ENCODE measurements at regions of chr19 and their contacts with region 1.

Region 1: DNA sequence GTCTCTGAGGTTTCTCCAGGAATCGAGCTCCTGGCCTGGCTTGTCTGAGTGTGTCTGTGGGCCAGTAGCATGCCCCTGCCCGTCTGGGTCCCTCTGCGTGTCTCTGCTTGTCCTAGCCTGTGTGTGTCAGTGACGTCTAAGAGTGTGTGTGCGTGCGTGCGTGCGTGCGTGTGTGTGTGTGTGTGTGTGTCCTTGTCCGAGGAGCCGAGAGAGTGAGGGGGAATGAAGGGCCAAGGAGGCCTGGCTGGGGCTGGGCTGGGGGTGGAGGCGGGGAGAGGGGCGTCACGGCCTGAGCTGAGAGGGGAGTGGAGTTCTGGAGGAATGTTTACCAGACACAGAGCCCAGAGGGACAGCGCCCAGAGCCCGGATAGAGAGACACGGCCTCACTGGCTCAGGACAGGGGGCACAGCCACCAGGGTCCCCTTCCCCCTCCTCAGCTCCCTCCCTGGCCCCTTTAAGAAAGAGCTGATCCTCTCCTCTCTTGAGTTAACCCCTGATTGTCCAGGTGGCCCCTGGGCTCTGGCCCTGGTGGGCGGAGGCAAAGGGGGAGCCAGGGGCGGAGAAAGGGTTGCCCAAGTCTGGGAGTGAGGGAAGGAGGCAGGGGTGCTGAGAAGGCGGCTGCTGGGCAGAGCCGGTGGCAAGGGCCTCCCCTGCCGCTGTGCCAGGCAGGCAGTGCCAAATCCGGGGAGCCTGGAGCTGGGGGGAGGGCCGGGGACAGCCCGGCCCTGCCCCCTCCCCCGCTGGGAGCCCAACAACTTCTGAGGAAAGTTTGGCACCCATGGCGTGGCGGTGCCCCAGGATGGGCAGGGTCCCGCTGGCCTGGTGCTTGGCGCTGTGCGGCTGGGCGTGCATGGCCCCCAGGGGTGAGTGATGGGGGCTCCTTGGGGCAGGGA is at the start of gene AXL:
- DNase-seq: peak; percentile 87
- H3K27ac ChIP-seq: peak within 1 kb of the TSS; percentile 98
- CTCF ChIP-seq: no peak

Region 2: DNA sequence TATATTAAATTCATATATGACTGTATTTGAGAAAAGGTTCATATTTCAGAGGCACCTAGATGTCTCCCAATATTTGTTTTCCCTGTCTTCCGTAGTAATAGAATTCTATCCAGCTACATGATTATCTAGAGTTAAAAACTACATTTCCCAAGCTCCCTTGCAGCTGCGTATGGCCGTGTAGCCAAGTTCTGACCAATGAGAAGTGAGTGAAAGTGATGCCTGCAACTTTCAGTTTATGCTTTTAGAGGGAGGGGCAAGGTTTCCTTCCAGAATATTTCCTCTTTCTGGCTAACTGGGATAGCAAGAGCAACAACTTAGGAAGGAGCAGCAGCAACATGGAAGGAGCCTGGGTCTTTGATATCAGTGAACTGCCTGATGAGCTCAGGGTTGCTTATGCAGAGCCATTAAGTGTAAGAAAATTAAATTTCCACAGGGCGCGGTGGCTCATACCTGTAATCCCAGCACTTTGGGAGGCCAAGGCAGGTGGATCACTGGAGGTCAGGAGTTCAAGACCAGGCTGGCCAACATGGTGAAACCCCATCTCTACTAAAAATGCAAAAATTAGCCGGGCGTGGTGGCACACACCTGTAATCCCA is 153.8 kb before region 1 on chr19:
- CTCF ChIA-PET with region 1: no interaction called
- POLR2A ChIA-PET with region 1: no interaction called
- DNase-seq: peak; percentile 32
- H3K27ac ChIP-seq: no peak overlapping the region
- CTCF ChIP-seq: no peak

Region 3: DNA sequence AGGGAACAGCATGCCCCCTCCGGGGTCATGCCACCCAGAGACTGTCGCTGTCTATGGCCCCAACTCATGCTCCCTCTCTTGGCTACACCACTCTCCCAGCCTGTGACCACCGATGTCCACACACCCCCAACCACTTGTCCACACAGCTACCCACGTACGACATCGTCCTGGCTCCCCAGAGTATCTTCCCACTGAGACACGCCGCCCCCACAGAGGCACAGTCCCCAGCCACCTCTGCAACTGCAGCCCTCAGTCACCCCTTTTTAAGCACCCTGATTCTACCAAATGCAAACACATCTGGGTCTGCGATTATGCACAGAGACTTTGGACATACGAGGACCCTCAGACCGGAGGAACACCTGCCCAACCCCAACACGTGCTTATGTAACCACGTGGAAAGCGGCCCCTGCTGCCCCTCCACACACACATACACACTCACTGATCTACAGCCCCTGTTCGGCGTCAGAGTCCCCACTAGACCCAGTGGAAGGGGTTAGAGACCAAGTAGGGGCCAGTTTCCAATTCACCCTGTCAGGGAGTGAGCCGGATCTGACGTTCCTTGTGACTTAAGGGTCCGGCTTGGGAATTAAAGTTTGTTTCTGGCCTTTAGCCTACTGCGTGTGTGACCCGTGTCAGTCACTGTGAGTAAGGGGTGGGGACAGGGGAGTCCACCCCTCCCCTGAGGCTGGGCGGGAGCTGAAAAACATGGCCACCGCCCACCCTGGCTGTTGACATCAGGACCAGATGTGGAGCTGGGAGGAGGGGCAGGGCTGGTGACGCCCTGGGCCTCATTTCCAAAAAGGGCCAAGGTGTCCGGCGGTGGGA is 11.7 kb before region 1 on chr19:
- CTCF ChIA-PET with region 1: interaction called, 12 read pairs
- POLR2A ChIA-PET with region 1: interaction called, 4 read pairs
- DNase-seq: no peak
- H3K27ac ChIP-seq: peak overlapping the region; percentile 7; the same call in 1 of the 2 replicates
- CTCF ChIP-seq: no peak